Activated CD4-positive, alpha-beta memory T cell treated with anti-CD3 and anti-CD28 coated beads for 36 hours (primary cell): ENCODE measurements at regions of chr3 and their contacts with region 1.

Region 1: GRCh38 chr3:138180375-138181029 is 5.8 kb upstream of the DBR1 start:
- DNase-seq: peak; percentile 49
- H3K4me3 Mint-ChIP-seq: no peak overlapping the region
- H3K27ac Mint-ChIP-seq: no peak overlapping the region
- H3K4me1 Mint-ChIP-seq: peaks cover 5% of the 10 kb centered on the region
- H3K27me3 Mint-ChIP-seq: peaks cover 6% of the 10 kb centered on the region

Region 2: DNA sequence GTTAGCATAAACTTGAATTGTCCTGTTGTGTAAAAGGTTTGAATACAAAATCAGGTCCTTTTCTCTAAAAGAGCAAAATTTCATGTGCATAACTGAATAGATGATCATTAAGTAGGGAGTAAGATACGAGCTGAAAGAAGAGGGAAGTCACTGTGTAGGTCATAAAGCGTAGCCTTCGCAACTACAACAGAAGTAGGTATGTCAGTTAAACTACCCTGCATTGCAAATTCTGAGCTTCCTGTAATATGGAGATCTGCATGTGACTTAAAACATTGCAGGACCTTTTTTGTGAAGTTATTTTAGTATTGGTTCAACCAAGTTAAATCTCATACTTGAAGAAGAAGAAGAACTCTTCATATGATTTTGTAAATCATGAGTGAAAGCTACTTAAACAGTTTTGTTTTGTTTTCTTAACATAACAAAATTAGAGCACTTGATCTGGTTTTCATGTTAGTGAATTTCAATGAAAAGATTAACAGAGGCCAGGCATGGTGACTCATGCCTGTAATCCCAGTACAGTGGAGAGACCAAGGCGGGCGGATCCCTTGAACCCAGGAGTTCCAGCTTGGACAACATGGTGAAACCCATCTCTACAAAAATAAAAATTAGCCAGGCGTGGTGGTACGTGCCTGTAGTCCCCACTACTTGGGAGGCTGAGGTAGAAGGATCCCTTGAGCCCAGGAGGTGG is 33.0 kb after region 1 on chr3:
- CTCF ChIA-PET with region 1: no interaction called
- POLR2A ChIA-PET with region 1: no interaction called
- intact Hi-C with region 1: no loop called
- DNase-seq: no peak
- H3K4me3 Mint-ChIP-seq: no peak overlapping the region
- H3K27ac Mint-ChIP-seq: no peak overlapping the region
- H3K4me1 Mint-ChIP-seq: peaks cover 12% of the 10 kb centered on the region
- H3K27me3 Mint-ChIP-seq: no peaks in the 10 kb centered on the region

Region 3: GRCh38 chr3:138284957-138285477 is 104.5 kb after region 1 on chr3:
- CTCF ChIA-PET with region 1: interaction called, 3 read pairs
- POLR2A ChIA-PET with region 1: no interaction called
- intact Hi-C with region 1: loop called (anchors 5 kb)
- DNase-seq: no peak
- H3K4me3 Mint-ChIP-seq: no peak overlapping the region
- H3K27ac Mint-ChIP-seq: no peak overlapping the region
- H3K4me1 Mint-ChIP-seq: peaks cover 14% of the 10 kb centered on the region
- H3K27me3 Mint-ChIP-seq: no peaks in the 10 kb centered on the region

Region 4: DNA sequence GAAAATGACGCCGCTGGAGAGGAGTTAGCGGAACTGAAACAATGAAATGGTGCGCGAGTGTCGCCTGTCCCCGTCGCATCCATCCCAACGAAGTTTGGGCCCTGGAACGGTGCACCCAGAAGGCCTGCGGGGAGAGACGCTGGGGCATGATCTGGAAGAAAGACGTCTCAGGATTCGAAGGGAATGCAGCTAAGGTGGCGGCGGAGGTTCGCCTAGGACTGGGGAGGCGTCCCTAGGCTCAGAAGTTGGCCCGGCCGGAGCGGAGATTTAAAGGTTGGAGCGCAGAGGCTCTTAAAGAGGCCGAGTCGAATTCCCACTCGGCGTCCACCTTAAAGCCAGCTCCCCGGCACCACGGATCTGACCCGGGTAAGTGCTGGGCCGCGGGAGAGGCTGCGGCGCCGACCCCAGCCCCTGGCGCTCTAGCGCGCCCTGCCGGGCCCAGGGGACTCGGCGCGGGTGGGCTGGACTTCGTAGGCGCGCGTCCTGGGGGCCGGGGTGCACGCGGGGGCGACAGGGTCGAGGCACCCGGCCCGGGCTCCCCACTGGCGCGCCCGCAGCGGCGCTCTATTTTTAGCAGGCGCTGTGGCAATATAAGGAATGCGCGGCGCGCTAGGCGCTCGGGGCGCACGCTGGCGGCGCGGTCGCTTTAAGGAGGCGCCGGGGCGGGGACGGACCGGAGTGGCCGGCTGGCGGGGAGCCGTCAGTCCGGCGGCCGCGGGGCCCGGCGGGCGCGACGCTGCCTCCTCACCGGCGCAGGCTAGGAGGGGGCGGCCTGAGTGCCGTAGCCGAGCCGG is 167.7 kb after region 1 on chr3 and contains the start of gene MRAS:
- CTCF ChIA-PET with region 1: interaction called, 5 read pairs
- POLR2A ChIA-PET with region 1: no interaction called
- intact Hi-C with region 1: loop called (anchors 1 kb)
- DNase-seq: peak; percentile 46
- H3K4me3 Mint-ChIP-seq: peak within 1 kb of the TSS; percentile 86
- H3K27ac Mint-ChIP-seq: no peak within 1 kb of the TSS
- H3K4me1 Mint-ChIP-seq: peaks cover 7% of the 10 kb centered on the region
- H3K27me3 Mint-ChIP-seq: peaks cover 31% of the 10 kb centered on the region
- total RNA-seq, gene MRAS: 0.10 to 0.19 TPM